Activated CD4-positive, alpha-beta T cell treated with anti-CD3 and anti-CD28 coated beads, Interleukin-2, amount 10 ng/mL, durations not matched to agents 24 days and 14 days (primary cell): ENCODE measurements at regions of chr6 and their contacts with region 1.

Region 1: GRCh38 chr6:50128420-50129005 is 78.8 kb upstream of the DEFB112 start:
- DNase-seq: no peak
- H3K4me3 Mint-ChIP-seq: no peak overlapping the region
- H3K27ac Mint-ChIP-seq: no peak overlapping the region
- H3K4me1 Mint-ChIP-seq: no peaks in the 10 kb centered on the region
- H3K27me3 Mint-ChIP-seq: no peaks in the 10 kb centered on the region

Region 2: DNA sequence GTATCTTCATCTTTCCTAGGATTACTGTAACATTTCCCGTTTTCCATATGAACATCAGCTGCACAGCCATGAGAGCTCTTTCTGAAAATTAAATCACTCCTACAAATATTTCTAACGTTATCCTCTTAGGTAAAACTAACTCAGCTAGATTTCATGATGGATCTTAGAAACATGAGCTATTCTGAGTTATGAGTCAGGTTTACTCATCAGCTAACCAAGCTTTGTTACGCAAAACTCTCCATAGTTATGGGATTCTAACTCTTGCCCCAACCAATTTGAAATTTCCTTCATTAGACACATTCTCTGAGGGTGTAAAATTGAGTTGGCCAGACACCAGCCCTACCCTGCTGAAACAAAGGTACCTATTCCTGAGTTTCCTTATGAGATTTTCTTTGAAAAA is 120.7 kb before region 1 on chr6:
- intact Hi-C with region 1: no loop called
- DNase-seq: no peak
- H3K4me3 Mint-ChIP-seq: no peak overlapping the region
- H3K27ac Mint-ChIP-seq: no peak overlapping the region
- H3K4me1 Mint-ChIP-seq: no peaks in the 10 kb centered on the region
- H3K27me3 Mint-ChIP-seq: no peaks in the 10 kb centered on the region

Region 3: GRCh38 chr6:50602292-50602691 is 473.8 kb after region 1 on chr6:
- intact Hi-C with region 1: loop called (anchors 1 kb)
- DNase-seq: peak; percentile 60
- H3K4me3 Mint-ChIP-seq: no peak overlapping the region
- H3K27ac Mint-ChIP-seq: no peak overlapping the region
- H3K4me1 Mint-ChIP-seq: no peaks in the 10 kb centered on the region
- H3K27me3 Mint-ChIP-seq: no peaks in the 10 kb centered on the region

Region 4: GRCh38 chr6:50791900-50792508 is 663.5 kb after region 1 on chr6:
- intact Hi-C with region 1: loop called (anchors 5 kb)
- DNase-seq: peak; percentile 60
- H3K4me3 Mint-ChIP-seq: no peak overlapping the region
- H3K27ac Mint-ChIP-seq: no peak overlapping the region
- H3K4me1 Mint-ChIP-seq: no peaks in the 10 kb centered on the region
- H3K27me3 Mint-ChIP-seq: no peaks in the 10 kb centered on the region